ENCODE measurements at regions of chr7 and their contacts with region 1.

Region 1: GRCh38 chr7:15158141-15158810 is 255.7 kb upstream of the DGKB start:
- DNase-seq: no peak
- ATAC-seq: no peak

Region 2: DNA sequence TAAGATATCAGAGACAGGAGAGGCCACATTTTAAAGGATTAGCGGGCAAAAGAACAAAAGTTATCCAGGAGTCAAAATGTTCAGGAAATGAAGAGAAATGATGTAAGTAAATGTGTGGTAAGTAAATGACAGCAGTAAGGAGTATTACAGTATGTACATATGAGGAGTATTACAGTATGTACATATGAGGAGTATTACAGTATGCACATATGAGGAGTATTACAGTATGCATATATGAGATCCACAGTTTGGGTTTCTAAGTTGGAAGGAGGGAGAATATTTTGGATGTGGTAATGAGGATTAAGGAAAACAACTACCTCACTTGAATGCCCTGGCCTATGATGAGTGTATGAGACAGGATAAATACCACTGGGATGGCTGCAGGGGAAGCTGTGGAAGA is 63.3 kb before region 1 on chr7:
- intact Hi-C with region 1: no loop called
- DNase-seq: no peak
- ATAC-seq: no peak

Region 3: DNA sequence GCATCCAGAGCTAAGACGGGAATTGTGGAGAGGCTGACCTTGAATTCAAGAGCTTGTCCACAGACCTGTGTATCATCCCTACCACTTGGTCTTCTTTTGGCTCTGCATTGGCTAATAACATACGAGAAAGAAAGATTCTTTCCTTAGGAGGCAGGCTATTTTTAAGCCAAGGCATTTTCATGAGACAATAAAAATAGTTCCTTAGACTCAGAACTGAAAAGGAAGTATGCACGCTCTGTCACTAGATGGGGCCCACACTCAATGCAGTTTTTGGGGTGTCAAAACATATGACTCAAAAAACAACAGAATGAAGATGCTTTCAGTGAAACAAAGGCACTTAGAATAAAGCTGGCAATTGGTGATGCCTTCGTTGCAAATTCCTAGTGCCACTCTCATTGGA is 10.2 kb after region 1 on chr7:
- intact Hi-C with region 1: loop called (anchors 1 kb)
- DNase-seq: no peak
- ATAC-seq: no peak

Region 4: GRCh38 chr7:15209429-15209828 is 51.2 kb after region 1 on chr7:
- intact Hi-C with region 1: no loop called
- DNase-seq: no peak
- ATAC-seq: no peak

Measured in left ventricle myocardium superior (tissue), 1 donor.